Stomach (tissue), 19 donors: ENCODE measurements at regions of chr1 and their contacts with region 1.

Region 1: GRCh38 chr1:184982002-184982954 is 8.0 kb upstream of the NIBAN1 start:
- DNase-seq: peak; percentile 82 to 87
- H3K4me3 ChIP-seq: no peak overlapping the region
- H3K27ac ChIP-seq: no peak overlapping the region
- H3K4me1 ChIP-seq: peaks cover 0 to 11% (median 5%) of the 10 kb centered on the region in 4 donors
- H3K27me3 ChIP-seq: no peaks in the 10 kb centered on the region
- CTCF ChIP-seq: peak in 5 of 7 experiments; percentile 82 to 94 (median 89)
- EP300 ChIP-seq: no peak
- POLR2A ChIP-seq: no peak

Region 2: DNA sequence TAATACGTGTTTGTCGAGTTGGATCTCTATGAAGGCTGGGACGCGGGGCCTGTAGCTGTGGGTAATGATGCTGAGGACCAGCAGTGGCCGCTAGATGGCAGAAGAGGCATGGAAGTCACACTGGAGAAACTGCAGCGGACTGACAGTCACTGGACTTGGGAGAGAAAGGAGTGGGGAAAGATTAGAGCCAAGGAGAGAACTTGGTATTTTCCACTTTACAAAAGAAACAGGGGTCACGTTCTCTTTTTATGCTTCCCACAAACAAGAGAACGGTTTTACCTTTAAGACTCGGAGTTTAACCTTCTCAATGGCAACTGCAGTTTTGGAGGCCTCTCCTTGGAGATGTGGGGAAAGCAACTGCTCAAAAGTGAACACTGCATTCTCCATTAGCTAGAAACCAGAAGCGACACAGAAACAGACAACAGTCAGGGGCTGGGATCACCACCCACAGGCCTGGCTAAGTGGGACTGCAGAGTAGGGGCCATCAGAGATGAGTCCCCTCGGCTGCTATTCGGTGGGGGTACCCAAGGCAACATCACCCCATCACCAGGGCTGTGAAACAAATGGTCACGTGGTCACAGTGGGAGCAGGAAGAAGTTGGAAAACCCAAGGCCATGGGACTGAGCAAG is 176.5 kb before region 1 on chr1:
- intact Hi-C with region 1: loop called (anchors 2 kb)
- DNase-seq: peak; percentile 95 to 96
- H3K4me3 ChIP-seq: no peak overlapping the region
- H3K27ac ChIP-seq: peak overlapping the region in 3 of 5 donors; percentile 30 to 75 (median 54)
- H3K4me1 ChIP-seq: peaks cover 21 to 63% (median 45%) of the 10 kb centered on the region in 4 donors
- H3K27me3 ChIP-seq: no peaks in the 10 kb centered on the region
- CTCF ChIP-seq: peak in 6 of 7 experiments; percentile 58 to 96 (median 93)
- EP300 ChIP-seq: no peak
- POLR2A ChIP-seq: no peak

Region 3: DNA sequence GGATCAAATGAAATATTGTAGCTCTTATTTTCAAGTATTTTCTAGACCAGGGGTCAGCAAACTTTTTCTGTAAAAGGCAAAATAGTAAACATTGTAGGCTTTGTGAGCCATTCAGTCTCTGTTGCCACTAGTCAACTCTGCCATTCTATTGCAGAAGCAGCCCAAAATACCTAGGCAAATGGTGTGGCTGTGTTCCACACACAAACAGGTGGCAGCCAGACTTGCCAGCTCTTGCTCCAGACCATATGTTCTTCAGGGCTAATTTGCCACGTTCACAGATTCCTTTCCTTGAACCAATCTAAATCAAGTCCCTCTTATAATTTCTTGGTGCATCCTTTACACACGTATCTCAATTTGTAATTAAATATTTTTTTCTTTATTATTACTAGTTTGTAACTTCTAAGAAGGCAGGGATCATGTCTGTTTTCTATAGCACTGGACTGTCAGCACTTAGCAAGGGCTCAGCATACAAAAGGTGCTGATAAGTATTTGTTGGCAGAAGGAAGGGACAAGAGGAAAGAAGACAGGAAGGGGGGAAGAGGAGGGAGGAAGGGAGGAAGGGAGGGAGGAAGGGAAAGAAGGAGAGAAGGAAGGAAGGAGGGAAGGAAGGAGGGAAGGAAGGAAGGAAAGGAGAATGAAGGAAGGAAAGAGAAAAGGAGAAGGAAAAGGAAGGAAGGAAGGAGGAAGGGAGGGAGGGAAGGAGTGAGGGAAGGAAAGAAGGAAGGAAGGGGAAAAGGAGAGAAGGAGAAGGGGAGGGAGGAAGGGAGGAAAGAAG is 121.1 kb before region 1 on chr1:
- intact Hi-C with region 1: no loop called
- DNase-seq: peak in 1 of 2 donors; percentile 59
- H3K4me3 ChIP-seq: no peak overlapping the region
- H3K27ac ChIP-seq: peak overlapping the region; percentile 23 to 59 (median 45)
- H3K4me1 ChIP-seq: peaks cover 8 to 59% (median 32%) of the 10 kb centered on the region in 4 donors
- H3K27me3 ChIP-seq: no peaks in the 10 kb centered on the region
- CTCF ChIP-seq: no peak
- EP300 ChIP-seq: no peak
- POLR2A ChIP-seq: no peak

Region 4: DNA sequence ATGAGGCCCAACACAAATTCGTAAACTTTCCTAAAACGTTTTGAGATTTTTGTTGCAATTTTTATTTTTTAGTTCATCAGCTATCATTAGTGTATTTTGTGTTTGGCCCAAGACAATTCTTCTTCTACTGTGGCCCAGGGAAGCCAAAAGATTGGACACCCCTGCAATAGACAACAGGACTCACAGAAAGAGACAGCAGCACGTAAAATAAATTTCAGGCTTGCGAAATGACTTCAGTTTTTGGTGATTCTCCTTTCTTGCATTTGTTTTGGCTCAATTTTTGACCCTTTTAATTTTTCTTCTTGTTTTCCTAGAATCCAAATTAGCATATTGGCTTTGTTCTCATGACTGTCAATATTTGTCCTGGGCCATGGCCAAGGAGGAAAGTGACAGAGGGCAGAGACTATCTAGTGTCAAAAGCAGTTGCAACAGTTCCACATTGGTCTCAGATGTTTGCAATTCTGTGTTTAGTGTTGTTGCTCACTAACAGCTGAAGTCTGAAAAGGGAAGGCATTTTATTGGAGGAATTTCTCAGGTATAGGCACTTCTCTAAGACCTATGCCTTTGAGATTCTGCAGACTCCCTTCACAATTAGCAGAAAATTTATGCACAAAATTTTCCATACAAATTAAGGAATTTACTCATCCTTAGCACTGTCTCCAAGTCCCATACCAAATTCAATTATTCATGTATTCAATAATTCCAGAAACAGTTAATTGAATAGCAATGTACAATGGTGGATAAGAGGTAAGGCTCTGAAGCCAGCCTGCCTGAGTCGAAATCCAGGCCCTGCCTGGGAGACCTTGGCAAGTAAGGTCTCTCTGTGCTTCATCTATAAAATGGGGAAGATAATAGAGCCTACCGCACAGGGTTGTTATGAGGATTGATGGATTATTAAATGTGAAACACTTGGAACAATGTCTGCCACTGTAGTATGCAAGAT is 495.6 kb after region 1 on chr1:
- intact Hi-C with region 1: no loop called
- DNase-seq: peak; percentile 37 to 58
- H3K4me3 ChIP-seq: no peak overlapping the region
- H3K27ac ChIP-seq: no peak overlapping the region
- H3K4me1 ChIP-seq: no peaks in the 10 kb centered on the region
- H3K27me3 ChIP-seq: no peaks in the 10 kb centered on the region
- CTCF ChIP-seq: no peak
- EP300 ChIP-seq: no peak
- POLR2A ChIP-seq: no peak